ENCODE measurements at regions of chr17 and their contacts with region 1.

Region 1: GRCh38 chr17:61412143-61412859 is 12.7 kb downstream of the TBX2 start:
- DNase-seq: peak; percentile 91

Region 2: GRCh38 chr17:61383689-61384201 is 28.6 kb before region 1 on chr17:
- CTCF ChIA-PET with region 1: no interaction called
- POLR2A ChIA-PET with region 1: no interaction called
- DNase-seq: no peak

Region 3: GRCh38 chr17:61537268-61537771 is 125.0 kb after region 1 on chr17:
- CTCF ChIA-PET with region 1: no interaction called
- POLR2A ChIA-PET with region 1: no interaction called
- DNase-seq: no peak

Region 4: GRCh38 chr17:61574542-61575174 is 162.4 kb after region 1 on chr17:
- CTCF ChIA-PET with region 1: interaction called, 23 read pairs
- POLR2A ChIA-PET with region 1: no interaction called
- DNase-seq: peak; percentile 69

Region 5: GRCh38 chr17:61583242-61583641 is 170.9 kb after region 1 on chr17:
- CTCF ChIA-PET with region 1: interaction called, 6 read pairs
- POLR2A ChIA-PET with region 1: interaction called, 11 read pairs
- DNase-seq: peak; percentile 59